Activated CD8-positive, alpha-beta memory T cell treated with anti-CD3 and anti-CD28 coated beads, Interleukin-2, amount 10 ng/mL, durations not matched to agents 7 days and 5 days (primary cell): ENCODE measurements at regions of chr15 and their contacts with region 1.

Region 1: GRCh38 chr15:81265944-81266775 is 57.8 kb downstream of the STARD5 start:
- DNase-seq: peak; percentile 90
- ATAC-seq: peak; percentile 96
- H3K4me3 Mint-ChIP-seq: peak overlapping the region; percentile 33
- H3K27ac Mint-ChIP-seq: peak overlapping the region; percentile 67
- H3K4me1 Mint-ChIP-seq: peaks cover 34% of the 10 kb centered on the region
- H3K27me3 Mint-ChIP-seq: peaks cover 11% of the 10 kb centered on the region

Region 2: GRCh38 chr15:80977627-80978036 is 288.5 kb before region 1 on chr15:
- CTCF ChIA-PET with region 1: interaction called, 37 read pairs
- DNase-seq: peak; percentile 56
- ATAC-seq: peak; percentile 64
- H3K4me3 Mint-ChIP-seq: no peak overlapping the region
- H3K27ac Mint-ChIP-seq: no peak overlapping the region
- H3K4me1 Mint-ChIP-seq: peaks cover 40% of the 10 kb centered on the region
- H3K27me3 Mint-ChIP-seq: no peaks in the 10 kb centered on the region

Region 3: DNA sequence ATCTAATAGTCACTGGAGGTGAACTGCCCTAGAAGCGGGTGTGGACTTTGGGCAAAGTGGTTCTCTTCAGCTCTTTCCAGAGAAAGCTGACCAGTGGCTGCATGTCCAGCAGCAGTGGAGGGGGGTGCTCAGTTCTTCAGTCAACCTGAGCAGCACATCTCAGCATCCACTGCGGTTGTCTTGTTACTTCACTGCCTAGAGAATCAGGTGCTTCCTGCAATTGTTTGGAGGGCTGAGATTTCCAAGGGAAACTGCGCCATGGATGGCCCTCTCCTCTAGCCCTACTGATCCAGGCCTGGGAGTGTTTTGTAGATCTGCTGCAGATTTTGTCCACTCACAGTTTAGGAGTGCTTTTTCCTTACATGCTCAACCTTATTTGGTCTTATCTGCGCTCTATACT is 197.6 kb before region 1 on chr15:
- CTCF ChIA-PET with region 1: no interaction called
- DNase-seq: no peak
- ATAC-seq: no peak
- H3K4me3 Mint-ChIP-seq: no peak overlapping the region
- H3K27ac Mint-ChIP-seq: no peak overlapping the region
- H3K4me1 Mint-ChIP-seq: no peaks in the 10 kb centered on the region
- H3K27me3 Mint-ChIP-seq: peaks cover 3% of the 10 kb centered on the region

Region 4: DNA sequence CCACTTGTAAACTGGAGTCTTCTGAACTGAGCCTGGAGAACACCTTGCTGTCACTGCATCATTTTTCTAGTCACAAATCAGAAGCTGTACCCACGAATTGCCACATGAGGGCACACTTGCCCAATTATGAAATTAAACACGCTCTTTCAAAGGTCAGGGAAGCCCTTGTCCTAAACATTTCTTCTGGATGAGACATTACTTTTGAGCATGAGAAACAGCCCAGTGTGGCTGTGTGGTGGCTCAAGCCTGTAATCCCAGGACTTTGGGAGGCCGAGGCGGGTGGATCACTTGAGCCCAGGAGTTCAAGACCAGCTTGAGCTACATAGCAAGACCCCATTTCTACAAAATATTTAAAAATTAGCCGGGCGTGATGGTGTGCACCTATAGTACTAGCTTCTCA is 159.6 kb before region 1 on chr15:
- CTCF ChIA-PET with region 1: interaction called, 276 read pairs
- DNase-seq: peak; percentile 57
- ATAC-seq: peak; percentile 51
- H3K4me3 Mint-ChIP-seq: no peak overlapping the region
- H3K27ac Mint-ChIP-seq: no peak overlapping the region
- H3K4me1 Mint-ChIP-seq: peaks cover 13% of the 10 kb centered on the region
- H3K27me3 Mint-ChIP-seq: peaks cover 59% of the 10 kb centered on the region

Region 5: DNA sequence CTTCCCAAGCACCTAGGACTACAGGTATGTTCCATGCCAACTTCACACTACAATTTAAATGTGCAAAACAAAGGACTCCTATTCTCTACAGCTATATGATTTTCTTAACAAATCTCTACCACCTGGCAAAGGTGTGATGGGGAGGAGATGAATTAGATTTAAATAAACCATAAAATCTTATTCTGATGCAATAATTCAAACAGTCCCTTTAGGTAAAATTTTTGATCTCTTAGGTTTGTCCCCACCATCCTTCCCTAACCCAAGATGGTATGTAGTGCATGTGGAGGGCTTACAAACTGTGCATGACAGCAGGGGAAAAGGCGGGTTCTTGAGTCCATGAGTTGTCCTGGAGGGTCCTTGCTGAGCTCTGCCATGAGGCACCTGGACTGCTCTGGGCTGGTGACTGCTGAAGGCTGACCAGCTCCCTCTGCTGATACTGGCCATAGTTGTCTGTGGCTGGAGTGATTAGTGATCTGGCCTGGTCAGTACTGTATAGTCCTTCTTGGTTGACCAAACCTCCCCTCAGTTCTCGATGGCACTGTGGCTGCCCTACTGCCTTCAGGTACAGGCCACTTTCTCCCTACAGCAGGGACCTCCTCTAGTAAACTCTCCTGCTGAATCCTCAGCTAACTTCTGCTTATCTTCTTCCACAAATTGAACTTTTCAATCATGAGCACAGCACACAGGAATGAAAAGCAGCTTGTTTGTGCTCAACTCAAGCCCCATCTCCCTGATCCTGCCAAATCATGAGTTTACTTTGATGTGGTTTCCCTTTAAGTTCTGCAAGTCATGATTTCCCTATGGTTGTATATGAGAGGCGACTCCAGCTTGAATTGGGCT is 102.0 kb before region 1 on chr15:
- CTCF ChIA-PET with region 1: interaction called, 20 read pairs
- DNase-seq: no peak
- ATAC-seq: no peak
- H3K4me3 Mint-ChIP-seq: no peak overlapping the region
- H3K27ac Mint-ChIP-seq: no peak overlapping the region
- H3K4me1 Mint-ChIP-seq: peaks cover 33% of the 10 kb centered on the region
- H3K27me3 Mint-ChIP-seq: peaks cover 14% of the 10 kb centered on the region

Region 6: GRCh38 chr15:81296673-81297072 is 30.5 kb after region 1 on chr15:
- CTCF ChIA-PET with region 1: interaction called, 42 read pairs
- DNase-seq: peak; percentile 93
- ATAC-seq: peak; percentile 73
- H3K4me3 Mint-ChIP-seq: peak overlapping the region; percentile 96
- H3K27ac Mint-ChIP-seq: peak overlapping the region; percentile 95
- H3K4me1 Mint-ChIP-seq: peaks cover 84% of the 10 kb centered on the region
- H3K27me3 Mint-ChIP-seq: no peaks in the 10 kb centered on the region

Region 7: DNA sequence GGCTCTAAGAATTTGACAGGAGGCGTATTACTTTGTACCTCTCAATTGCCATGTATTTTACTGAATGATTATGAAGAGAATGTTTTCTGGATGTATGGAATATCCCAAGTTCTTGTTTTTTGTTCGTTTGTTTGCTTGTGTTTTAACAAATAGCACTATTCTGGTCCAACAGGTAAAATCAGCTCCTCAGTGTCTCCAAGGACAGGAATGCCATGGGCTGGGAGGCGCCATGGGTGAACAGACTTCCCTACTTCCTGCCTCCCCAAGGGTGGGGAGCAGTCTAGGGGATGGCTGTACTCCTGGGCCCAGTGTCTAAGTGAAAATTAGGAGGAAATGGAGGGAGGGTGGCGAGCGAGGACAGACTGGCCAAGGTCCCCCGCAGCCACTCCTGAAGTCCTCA is 76.4 kb after region 1 on chr15:
- CTCF ChIA-PET with region 1: interaction called, 78 read pairs
- DNase-seq: no peak
- ATAC-seq: no peak
- H3K4me3 Mint-ChIP-seq: no peak overlapping the region
- H3K27ac Mint-ChIP-seq: no peak overlapping the region
- H3K4me1 Mint-ChIP-seq: peaks cover 14% of the 10 kb centered on the region
- H3K27me3 Mint-ChIP-seq: peaks cover 3% of the 10 kb centered on the region

Region 8: GRCh38 chr15:81485806-81486205 is 219.6 kb after region 1 on chr15:
- CTCF ChIA-PET with region 1: no interaction called
- DNase-seq: no peak
- ATAC-seq: no peak
- H3K4me3 Mint-ChIP-seq: no peak overlapping the region
- H3K27ac Mint-ChIP-seq: no peak overlapping the region
- H3K4me1 Mint-ChIP-seq: no peaks in the 10 kb centered on the region
- H3K27me3 Mint-ChIP-seq: peaks cover 2% of the 10 kb centered on the region

Region 9: DNA sequence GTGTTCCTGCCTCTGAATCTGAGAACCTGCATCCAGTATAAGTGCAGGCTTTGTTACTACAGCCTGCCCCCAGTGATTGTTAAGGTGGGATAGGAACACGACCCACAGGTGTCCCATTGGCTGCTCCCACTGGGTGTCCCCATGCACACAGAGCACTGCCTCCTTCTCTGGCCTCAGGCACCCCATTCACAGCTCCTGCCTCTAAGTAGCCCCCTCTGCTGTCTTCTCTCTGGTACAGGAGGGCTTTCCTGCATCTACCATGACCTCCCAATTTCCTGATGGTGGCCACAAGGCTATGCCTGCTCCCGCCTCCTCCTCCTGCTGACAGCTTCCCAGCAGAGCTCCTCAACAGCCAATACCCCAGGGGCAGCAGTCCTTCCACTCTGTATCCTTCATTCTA is 346.5 kb after region 1 on chr15:
- CTCF ChIA-PET with region 1: no interaction called
- DNase-seq: no peak
- ATAC-seq: no peak
- H3K4me3 Mint-ChIP-seq: no peak overlapping the region
- H3K27ac Mint-ChIP-seq: no peak overlapping the region
- H3K4me1 Mint-ChIP-seq: no peaks in the 10 kb centered on the region
- H3K27me3 Mint-ChIP-seq: peaks cover 10% of the 10 kb centered on the region